CD4-positive, alpha-beta T cell (primary cell): ENCODE measurements at regions of chr10 and their contacts with region 1.

Region 1: DNA sequence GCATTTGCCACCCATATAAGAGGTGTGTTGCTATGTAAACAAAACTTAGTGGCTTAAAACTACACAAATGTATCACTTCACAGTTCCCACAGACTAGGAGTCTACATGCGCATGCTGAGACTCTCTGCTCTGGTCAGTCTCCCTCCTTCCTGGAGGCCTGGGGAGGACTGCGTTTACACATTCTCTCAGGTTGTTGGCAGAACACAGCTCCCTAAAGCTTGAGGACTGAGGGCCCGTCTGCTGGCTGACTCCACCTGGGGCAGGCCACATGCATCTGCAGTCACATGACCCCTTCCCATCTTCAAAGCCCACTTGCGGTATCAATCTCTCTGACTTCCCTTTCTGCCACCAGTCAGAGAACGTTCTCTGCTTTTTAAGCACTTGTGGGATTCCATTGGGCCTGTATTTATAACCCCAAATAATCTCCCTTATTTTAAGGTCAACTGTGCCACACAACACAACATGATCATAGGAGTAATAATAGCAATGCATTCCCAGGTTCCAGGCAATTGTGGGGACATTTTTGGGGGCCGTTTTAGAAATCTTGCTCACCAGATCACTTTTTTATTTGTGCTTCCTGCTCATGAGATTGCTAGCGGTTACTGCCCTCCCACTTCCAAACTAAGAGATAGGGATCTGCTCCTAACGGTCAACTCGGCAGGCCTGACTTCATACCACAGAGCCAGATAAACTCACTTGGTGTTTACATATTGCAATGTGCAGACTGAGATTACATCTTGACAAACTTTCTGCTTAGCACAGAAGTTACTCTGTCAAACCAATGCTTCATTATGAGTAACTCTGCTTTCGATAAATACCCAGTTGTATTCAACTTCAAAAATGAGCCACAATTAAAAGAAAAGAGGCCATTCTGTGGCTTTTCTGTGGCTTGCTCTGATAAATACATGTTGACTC is 96.3 kb downstream of the ALOX5 start:
- DNase-seq: peak; percentile 31 to 82 (median 54)
- ATAC-seq: peak; percentile 95
- H3K4me3 ChIP-seq: no peak overlapping the region
- H3K4me3 Mint-ChIP-seq: peak overlapping the region; percentile 1
- H3K27ac ChIP-seq: peak overlapping the region; percentile 38 to 55
- H3K27ac Mint-ChIP-seq: peak overlapping the region; percentile 79
- H3K4me1 ChIP-seq: peaks cover 13% of the 10 kb centered on the region
- H3K4me1 Mint-ChIP-seq: peaks cover 43% of the 10 kb centered on the region
- H3K27me3 ChIP-seq: no peaks in the 10 kb centered on the region
- H3K27me3 Mint-ChIP-seq: no peaks in the 10 kb centered on the region
- CTCF ChIP-seq: no peak

Region 2: DNA sequence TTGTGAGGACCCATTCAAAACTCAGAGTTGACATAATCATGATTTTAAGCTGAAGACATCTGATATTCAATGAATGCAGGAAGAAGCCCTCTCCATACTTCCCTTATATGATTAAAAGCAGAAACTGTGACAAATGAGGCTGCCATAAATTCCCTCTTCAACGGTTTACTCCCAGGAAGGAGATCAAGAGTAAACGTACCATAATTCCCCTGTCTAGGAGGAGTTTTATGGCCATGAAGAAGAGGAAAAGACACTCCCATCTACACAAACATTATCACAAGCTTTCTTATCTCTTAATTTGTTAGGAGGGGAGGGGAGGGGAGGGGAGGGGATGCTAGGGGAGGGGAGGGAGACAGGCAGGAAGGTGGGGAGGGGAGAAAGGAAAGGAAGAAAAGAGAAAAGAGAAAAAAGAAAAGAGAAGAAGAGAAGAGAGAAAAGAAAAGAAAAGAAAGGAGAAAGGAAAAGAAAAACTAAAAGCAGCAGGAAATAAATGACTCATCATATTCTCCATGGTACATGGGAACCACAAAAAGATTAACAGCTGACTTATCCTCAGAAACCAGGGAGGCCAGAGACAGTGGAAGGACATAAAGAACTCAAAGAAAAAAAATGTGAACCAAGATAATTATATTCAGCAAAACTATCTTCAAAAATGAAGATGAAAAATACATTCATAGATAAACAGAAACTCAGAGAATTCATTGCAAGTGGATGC is 25.2 kb after region 1 on chr10:
- CTCF ChIA-PET with region 1: no interaction called
- POLR2A ChIA-PET with region 1: no interaction called
- intact Hi-C with region 1: no loop called
- DNase-seq: peak in 1 of 14 experiments; percentile 29
- ATAC-seq: no peak
- H3K4me3 ChIP-seq: no peak overlapping the region
- H3K4me3 Mint-ChIP-seq: no peak overlapping the region
- H3K27ac ChIP-seq: no peak overlapping the region
- H3K27ac Mint-ChIP-seq: no peak overlapping the region
- H3K4me1 ChIP-seq: no peaks in the 10 kb centered on the region
- H3K4me1 Mint-ChIP-seq: peaks cover 9% of the 10 kb centered on the region
- H3K27me3 ChIP-seq: no peaks in the 10 kb centered on the region
- H3K27me3 Mint-ChIP-seq: no peaks in the 10 kb centered on the region
- CTCF ChIP-seq: no peak

Region 3: GRCh38 chr10:45594276-45595106 is 124.1 kb after region 1 on chr10:
- CTCF ChIA-PET with region 1: no interaction called
- POLR2A ChIA-PET with region 1: interaction called, 5 read pairs
- intact Hi-C with region 1: loop called (anchors 5 to 10 kb)
- DNase-seq: peak; percentile 75 to 95 (median 87)
- ATAC-seq: peak; percentile 88
- H3K4me3 ChIP-seq: peak overlapping the region; percentile 94
- H3K4me3 Mint-ChIP-seq: peak overlapping the region; percentile 97
- H3K27ac ChIP-seq: peak overlapping the region in 1 of 2 donors; percentile 40
- H3K27ac Mint-ChIP-seq: peak overlapping the region; percentile 87
- H3K4me1 ChIP-seq: peaks cover 12% of the 10 kb centered on the region
- H3K4me1 Mint-ChIP-seq: peaks cover 46% of the 10 kb centered on the region
- H3K27me3 ChIP-seq: no peaks in the 10 kb centered on the region
- H3K27me3 Mint-ChIP-seq: peaks cover 4% of the 10 kb centered on the region
- CTCF ChIP-seq: no peak